HepG2 (cell line): ENCODE measurements at regions of chr12 and their contacts with region 1.

Region 1: GRCh38 chr12:92570056-92570753 is 132.6 kb upstream of the PLEKHG7 start:
- DNase-seq: peak; percentile 67
- ATAC-seq: peak; percentile 78
- H3K4me3 ChIP-seq: no peak overlapping the region
- H3K27ac ChIP-seq: no peak overlapping the region
- H3K4me1 ChIP-seq: peaks cover 8% of the 10 kb centered on the region
- H3K27me3 ChIP-seq: no peaks in the 10 kb centered on the region
- CTCF ChIP-seq: peak; percentile 79
- EP300 ChIP-seq: no peak
- POLR2A ChIP-seq: no peak
- RAD21 ChIP-seq: peak; percentile 64

Region 2: GRCh38 chr12:91577586-91578539 is 992.3 kb before region 1 on chr12:
- CTCF ChIA-PET with region 1: no interaction called
- POLR2A ChIA-PET with region 1: no interaction called
- in situ Hi-C with region 1: no loop called
- intact Hi-C with region 1: loop called (anchors 2 kb)
- DNase-seq: no peak
- ATAC-seq: no peak
- H3K4me3 ChIP-seq: no peak overlapping the region
- H3K27ac ChIP-seq: no peak overlapping the region
- H3K4me1 ChIP-seq: no peaks in the 10 kb centered on the region
- H3K27me3 ChIP-seq: no peaks in the 10 kb centered on the region
- CTCF ChIP-seq: no peak
- EP300 ChIP-seq: no peak
- POLR2A ChIP-seq: no peak
- RAD21 ChIP-seq: no peak

Region 3: GRCh38 chr12:91811481-91812287 is 758.5 kb before region 1 on chr12:
- CTCF ChIA-PET with region 1: interaction called, 21 read pairs
- POLR2A ChIA-PET with region 1: no interaction called
- in situ Hi-C with region 1: loop called (anchors 10 kb)
- intact Hi-C with region 1: loop called (anchors 1 kb)
- DNase-seq: peak; percentile 42
- ATAC-seq: peak; percentile 58
- H3K4me3 ChIP-seq: no peak overlapping the region
- H3K27ac ChIP-seq: no peak overlapping the region
- H3K4me1 ChIP-seq: no peaks in the 10 kb centered on the region
- H3K27me3 ChIP-seq: no peaks in the 10 kb centered on the region
- CTCF ChIP-seq: peak; percentile 64
- EP300 ChIP-seq: no peak
- POLR2A ChIP-seq: no peak
- RAD21 ChIP-seq: 0 out of 2 replicates have a peak, but pooled peaks have one; percentile 34

Region 4: GRCh38 chr12:92408072-92408900 is 161.9 kb before region 1 on chr12:
- CTCF ChIA-PET with region 1: no interaction called
- POLR2A ChIA-PET with region 1: no interaction called
- in situ Hi-C with region 1: no loop called
- intact Hi-C with region 1: loop called (anchors 1 kb)
- DNase-seq: peak; percentile 4
- ATAC-seq: peak; percentile 81
- H3K4me3 ChIP-seq: no peak overlapping the region
- H3K27ac ChIP-seq: no peak overlapping the region
- H3K4me1 ChIP-seq: no peaks in the 10 kb centered on the region
- H3K27me3 ChIP-seq: no peaks in the 10 kb centered on the region
- CTCF ChIP-seq: peak; percentile 70
- EP300 ChIP-seq: no peak
- POLR2A ChIP-seq: no peak
- RAD21 ChIP-seq: no peak

Region 5: GRCh38 chr12:92425165-92425564 is 145.0 kb before region 1 on chr12:
- CTCF ChIA-PET with region 1: no interaction called
- POLR2A ChIA-PET with region 1: no interaction called
- in situ Hi-C with region 1: no loop called
- intact Hi-C with region 1: loop called (anchors 5 kb)
- DNase-seq: no peak
- ATAC-seq: no peak
- H3K4me3 ChIP-seq: no peak overlapping the region
- H3K27ac ChIP-seq: no peak overlapping the region
- H3K4me1 ChIP-seq: no peaks in the 10 kb centered on the region
- H3K27me3 ChIP-seq: no peaks in the 10 kb centered on the region; a peak in 1 of 5 replicates
- CTCF ChIP-seq: no peak
- EP300 ChIP-seq: no peak
- POLR2A ChIP-seq: no peak
- RAD21 ChIP-seq: no peak

Region 6: DNA sequence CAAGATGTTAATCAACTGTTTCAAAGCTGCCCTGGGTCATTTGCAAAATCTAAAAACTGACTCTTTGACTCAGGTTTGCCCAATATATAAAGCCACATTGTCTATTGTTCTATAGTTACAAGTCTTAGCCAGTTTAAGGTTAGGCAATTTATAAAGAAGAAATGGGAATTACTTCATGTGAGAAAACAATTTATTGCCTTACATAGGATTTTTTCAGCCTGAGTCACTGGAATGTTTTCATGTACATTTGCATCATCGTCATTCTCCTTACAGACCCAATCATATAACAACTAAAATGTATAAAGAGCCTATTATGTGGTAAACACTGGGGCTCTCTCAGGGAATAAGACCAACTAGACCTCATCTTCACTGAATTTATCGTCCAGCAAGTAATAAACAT is 32.3 kb after region 1 on chr12:
- CTCF ChIA-PET with region 1: no interaction called
- POLR2A ChIA-PET with region 1: no interaction called
- in situ Hi-C with region 1: no loop called
- intact Hi-C with region 1: no loop called
- DNase-seq: no peak
- ATAC-seq: no peak
- H3K4me3 ChIP-seq: no peak overlapping the region
- H3K27ac ChIP-seq: no peak overlapping the region
- H3K4me1 ChIP-seq: no peaks in the 10 kb centered on the region
- H3K27me3 ChIP-seq: no peaks in the 10 kb centered on the region
- CTCF ChIP-seq: no peak
- EP300 ChIP-seq: no peak
- POLR2A ChIP-seq: no peak
- RAD21 ChIP-seq: no peak

Region 7: GRCh38 chr12:92649511-92650227 is 79.5 kb after region 1 on chr12:
- CTCF ChIA-PET with region 1: no interaction called
- POLR2A ChIA-PET with region 1: no interaction called
- in situ Hi-C with region 1: no loop called
- intact Hi-C with region 1: loop called (anchors 2 kb)
- DNase-seq: peak; percentile 59
- ATAC-seq: peak; percentile 98
- H3K4me3 ChIP-seq: no peak overlapping the region
- H3K27ac ChIP-seq: no peak overlapping the region
- H3K4me1 ChIP-seq: no peaks in the 10 kb centered on the region
- H3K27me3 ChIP-seq: no peaks in the 10 kb centered on the region
- CTCF ChIP-seq: peak; percentile 83
- EP300 ChIP-seq: no peak
- POLR2A ChIP-seq: no peak
- RAD21 ChIP-seq: peak; percentile 58; the same call in 1 of the 2 replicates

Region 8: DNA sequence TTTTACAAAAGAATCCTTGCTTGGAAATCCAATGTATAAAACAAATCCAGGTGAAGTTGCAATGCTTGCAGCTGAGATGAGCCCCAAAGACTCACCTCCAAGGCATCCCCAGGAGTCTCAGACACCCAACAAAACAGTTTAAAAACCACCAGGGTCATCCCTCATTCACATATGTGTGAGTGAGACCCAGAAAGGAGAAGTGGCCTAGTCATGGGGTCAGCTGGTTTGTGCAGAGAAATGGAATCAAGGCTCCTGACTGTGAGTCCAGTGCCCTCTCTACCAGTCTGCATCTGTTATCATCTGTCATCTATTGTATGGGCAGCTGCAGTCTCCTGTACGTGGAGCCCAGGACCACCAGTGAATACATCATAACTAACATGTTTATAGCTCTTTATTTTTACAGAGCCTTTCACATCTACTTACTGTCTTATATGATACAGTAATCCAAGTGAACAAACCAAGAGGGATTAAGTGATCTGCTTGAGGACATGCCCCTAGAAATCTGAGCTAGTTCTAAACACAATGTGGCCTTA is 159.6 kb after region 1 on chr12:
- CTCF ChIA-PET with region 1: no interaction called
- POLR2A ChIA-PET with region 1: no interaction called
- in situ Hi-C with region 1: no loop called
- intact Hi-C with region 1: no loop called
- DNase-seq: no peak
- ATAC-seq: no peak
- H3K4me3 ChIP-seq: no peak overlapping the region
- H3K27ac ChIP-seq: no peak overlapping the region
- H3K4me1 ChIP-seq: no peaks in the 10 kb centered on the region
- H3K27me3 ChIP-seq: no peaks in the 10 kb centered on the region; a peak in 1 of 5 replicates
- CTCF ChIP-seq: no peak
- EP300 ChIP-seq: no peak
- POLR2A ChIP-seq: no peak
- RAD21 ChIP-seq: no peak